ENCODE measurements at regions of chr1 and their contacts with region 1.

Region 1: GRCh38 chr1:17488995-17489767 is 49.7 kb upstream of the RCC2 start:
- DNase-seq: peak; percentile 71
- H3K4me3 ChIP-seq: no peak overlapping the region
- H3K27ac ChIP-seq: peak overlapping the region in 1 of 2 experiments; percentile 54; a peak in 2 of 4 replicates
- H3K4me1 ChIP-seq: peaks cover 6% of the 10 kb centered on the region in 2 experiments; a peak in 2 of 4 replicates
- H3K27me3 ChIP-seq: no peaks in the 10 kb centered on the region
- CTCF ChIP-seq: no peak
- EP300 ChIP-seq: peak in 1 of 2 experiments; percentile 73; a peak in 2 of 4 replicates
- RAD21 ChIP-seq: no peak

Region 2: DNA sequence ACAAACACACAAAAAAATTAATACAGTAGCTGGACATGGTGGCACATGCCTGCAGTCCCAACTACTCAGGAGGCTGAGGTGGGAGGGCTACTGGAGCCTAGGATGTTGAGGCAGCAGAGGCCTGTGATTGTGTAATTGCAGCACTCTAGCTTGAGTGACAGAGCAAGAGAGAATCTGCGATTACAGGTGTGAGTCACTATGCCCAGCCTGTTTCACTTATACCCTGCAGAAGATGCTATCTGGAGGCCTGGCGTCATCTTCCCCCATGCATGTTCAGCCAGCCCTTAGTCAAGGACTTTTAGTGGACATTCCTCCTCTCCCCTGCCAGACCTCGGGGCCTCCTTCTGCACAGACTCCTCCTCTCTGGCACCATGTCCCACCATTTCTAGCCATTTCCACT is 13.5 kb before region 1 on chr1:
- CTCF ChIA-PET with region 1: interaction called, 34 read pairs
- POLR2A ChIA-PET with region 1: no interaction called
- DNase-seq: peak; percentile 42
- H3K4me3 ChIP-seq: no peak overlapping the region
- H3K27ac ChIP-seq: peak overlapping the region in 1 of 2 experiments; percentile 48; a peak in 2 of 4 replicates
- H3K4me1 ChIP-seq: no peaks in the 10 kb centered on the region; a peak in 1 of 4 replicates
- H3K27me3 ChIP-seq: no peaks in the 10 kb centered on the region
- CTCF ChIP-seq: no peak
- EP300 ChIP-seq: 0 out of 4 replicates have a peak, but pooled peaks of 1 of the 2 experiments have one; percentile 42
- RAD21 ChIP-seq: no peak